Pancreas (tissue), 10 donors: ENCODE measurements at regions of chr19 and their contacts with region 1.

Region 1: DNA sequence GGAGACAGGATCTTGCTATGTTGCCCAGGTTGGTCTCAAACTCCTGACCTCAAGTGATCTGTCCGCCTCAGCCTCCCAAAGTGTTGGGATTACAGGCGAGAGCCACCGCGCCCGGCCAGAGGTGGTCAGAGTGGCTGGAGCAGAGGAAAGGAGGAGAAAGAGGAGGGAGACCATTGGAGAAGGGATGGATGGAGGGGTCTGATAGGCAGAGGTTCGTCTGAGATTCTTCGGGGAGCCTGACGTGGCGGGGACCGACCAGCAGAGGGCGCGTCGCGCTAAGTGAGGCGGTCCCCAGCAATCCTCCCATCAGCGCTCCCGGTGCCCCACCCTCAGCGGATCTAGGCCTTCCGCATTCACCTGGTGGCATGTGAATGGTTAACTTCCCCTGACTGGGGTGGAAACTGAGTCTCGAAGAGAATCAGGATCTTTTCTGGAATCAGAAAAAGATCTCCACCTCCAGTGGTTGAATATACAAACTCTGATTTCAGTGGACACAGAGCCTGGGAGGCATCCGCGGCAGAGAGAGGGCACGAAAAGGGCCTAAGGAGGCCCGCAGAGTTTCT is 8.8 kb downstream of the GTPBP3 start:
- DNase-seq: peak in 5 of 6 donors; percentile 51 to 91 (median 74)
- ATAC-seq: peak; percentile 79 to 97 (median 93)
- H3K4me3 ChIP-seq: no peak overlapping the region
- H3K27ac ChIP-seq: no peak overlapping the region
- H3K4me1 ChIP-seq: no peaks in the 10 kb centered on the region
- H3K27me3 ChIP-seq: no peaks in the 10 kb centered on the region
- CTCF ChIP-seq: peak; percentile 93 to 95 (median 94)

Region 2: GRCh38 chr19:17469481-17470067 is 123.4 kb after region 1 on chr19:
- intact Hi-C with region 1: loop called in 1 of 3 experiments (anchors 5 kb)
- DNase-seq: peak; percentile 94 to 99 (median 98)
- ATAC-seq: peak; percentile 80 to 85 (median 82)
- H3K4me3 ChIP-seq: peak overlapping the region; percentile 70 to 88 (median 78)
- H3K27ac ChIP-seq: peak overlapping the region; percentile 47 to 90 (median 84)
- H3K4me1 ChIP-seq: peaks cover 0 to 10% (median 0%) of the 10 kb centered on the region in 3 donors
- H3K27me3 ChIP-seq: no peaks in the 10 kb centered on the region
- CTCF ChIP-seq: no peak

Region 3: DNA sequence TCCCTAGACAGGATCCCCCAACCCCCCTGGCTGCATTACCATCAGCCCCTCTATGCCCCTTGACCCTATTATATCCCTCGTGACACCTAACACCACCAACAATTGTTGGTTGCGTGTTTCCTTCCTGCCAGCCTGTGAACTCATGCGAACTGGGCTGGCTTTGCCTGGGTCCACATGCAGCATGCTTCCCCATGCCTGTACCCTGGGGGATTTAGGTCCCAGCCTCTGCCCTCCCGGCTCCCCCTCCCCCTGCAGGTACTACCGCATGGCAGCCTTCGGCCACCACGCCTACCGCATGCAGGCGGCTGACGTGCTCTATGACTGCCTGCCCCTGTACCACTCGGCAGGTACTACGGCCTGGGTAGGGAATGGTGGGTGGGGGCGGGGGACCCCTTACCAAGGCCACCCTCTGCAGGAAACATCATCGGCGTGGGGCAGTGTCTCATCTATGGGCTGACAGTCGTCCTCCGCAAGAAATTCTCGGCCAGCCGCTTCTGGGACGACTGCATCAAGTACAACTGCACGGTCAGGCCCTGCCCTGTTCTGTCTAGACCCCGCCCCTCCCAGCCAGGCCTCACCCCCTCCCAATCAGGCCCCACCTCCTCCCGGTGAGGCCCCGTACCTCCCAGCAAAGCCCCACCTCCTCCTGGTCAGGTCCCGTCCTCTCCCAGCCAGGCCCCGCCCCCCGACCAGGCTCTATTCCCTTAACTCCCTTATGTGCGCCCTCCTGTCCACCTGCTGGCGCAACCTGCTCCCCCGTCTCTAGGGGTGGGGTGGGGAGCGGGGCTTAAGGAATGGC is 142.6 kb after region 1 on chr19:
- intact Hi-C with region 1: no loop called
- DNase-seq: peak; percentile 86 to 94 (median 90)
- ATAC-seq: peak; percentile 98 to 99 (median 98)
- H3K4me3 ChIP-seq: peak overlapping the region in 2 of 4 donors; percentile 20 to 33
- H3K27ac ChIP-seq: no peak overlapping the region
- H3K4me1 ChIP-seq: peaks cover 0 to 10% (median 0%) of the 10 kb centered on the region in 3 donors
- H3K27me3 ChIP-seq: no peaks in the 10 kb centered on the region
- CTCF ChIP-seq: peak in 1 of 4 donors; percentile 7